Activated T-helper 2 cell treated with anti-CD3 and anti-CD28 coated beads, Interferon-gamma antibody, Interleukin-2, Interleukin-4, amounts not matched to agents 10 μg/mL and 5 μg/mL and 100 μg/mL, durations not matched to agents 14 hours and 24 hours and 36 hours (primary cell): ENCODE measurements at regions of chr3 and their contacts with region 1.

Region 1: GRCh38 chr3:146160964-146161662 is at the start of gene PLOD2:
- DNase-seq: peak; percentile 8
- H3K4me3 Mint-ChIP-seq: peak within 1 kb of the TSS; percentile 70
- H3K27ac Mint-ChIP-seq: no peak within 1 kb of the TSS
- H3K4me1 Mint-ChIP-seq: peaks cover 14% of the 10 kb centered on the region
- H3K27me3 Mint-ChIP-seq: peaks cover 62% of the 10 kb centered on the region
- total RNA-seq, gene PLOD2: 1.1 and 2.2 TPM in 2 replicates

Region 2: GRCh38 chr3:146550743-146551510 is 389.8 kb after region 1 on chr3:
- intact Hi-C with region 1: loop called (anchors 5 kb)
- DNase-seq: no peak
- H3K4me3 Mint-ChIP-seq: no peak overlapping the region
- H3K27ac Mint-ChIP-seq: no peak overlapping the region
- H3K4me1 Mint-ChIP-seq: peaks cover 51% of the 10 kb centered on the region
- H3K27me3 Mint-ChIP-seq: peaks cover 4% of the 10 kb centered on the region